CD4-positive, alpha-beta memory T cell (primary cell): ENCODE measurements at regions of chr14 and their contacts with region 1.

Region 1: GRCh38 chr14:106511006-106511799 is 984.8 kb downstream of the TMEM121 start:
- DNase-seq: peak; percentile 64 to 83 (median 72)
- H3K4me3 ChIP-seq: no peak overlapping the region
- H3K4me3 Mint-ChIP-seq: peak overlapping the region; percentile 50 to 83 (median 66)
- H3K27ac ChIP-seq: peak overlapping the region; percentile 47
- H3K27ac Mint-ChIP-seq: peak overlapping the region; percentile 86 to 98 (median 97)
- H3K4me1 ChIP-seq: peaks cover 77% of the 10 kb centered on the region
- H3K4me1 Mint-ChIP-seq: peaks cover 53 to 82% (median 70%) of the 10 kb centered on the region in 4 donors
- H3K27me3 ChIP-seq: no peaks in the 10 kb centered on the region
- H3K27me3 Mint-ChIP-seq: no peaks in the 10 kb centered on the region

Region 2: GRCh38 chr14:106417224-106418049 is 93.8 kb before region 1 on chr14:
- CTCF ChIA-PET with region 1: interaction called, 12 read pairs
- POLR2A ChIA-PET with region 1: no interaction called
- intact Hi-C with region 1: no loop called
- DNase-seq: peak; percentile 55 to 87 (median 72)
- H3K4me3 ChIP-seq: no peak overlapping the region
- H3K4me3 Mint-ChIP-seq: peak overlapping the region in 2 of 8 donors; percentile 36 to 59
- H3K27ac ChIP-seq: no peak overlapping the region
- H3K27ac Mint-ChIP-seq: peak overlapping the region in 5 of 7 donors; percentile 37 to 91 (median 81)
- H3K4me1 ChIP-seq: no peaks in the 10 kb centered on the region
- H3K4me1 Mint-ChIP-seq: peaks cover 0 to 7% (median 3%) of the 10 kb centered on the region in 4 donors
- H3K27me3 ChIP-seq: no peaks in the 10 kb centered on the region
- H3K27me3 Mint-ChIP-seq: peaks cover 0 to 12% of the 10 kb centered on the region in 2 donors

Region 3: DNA sequence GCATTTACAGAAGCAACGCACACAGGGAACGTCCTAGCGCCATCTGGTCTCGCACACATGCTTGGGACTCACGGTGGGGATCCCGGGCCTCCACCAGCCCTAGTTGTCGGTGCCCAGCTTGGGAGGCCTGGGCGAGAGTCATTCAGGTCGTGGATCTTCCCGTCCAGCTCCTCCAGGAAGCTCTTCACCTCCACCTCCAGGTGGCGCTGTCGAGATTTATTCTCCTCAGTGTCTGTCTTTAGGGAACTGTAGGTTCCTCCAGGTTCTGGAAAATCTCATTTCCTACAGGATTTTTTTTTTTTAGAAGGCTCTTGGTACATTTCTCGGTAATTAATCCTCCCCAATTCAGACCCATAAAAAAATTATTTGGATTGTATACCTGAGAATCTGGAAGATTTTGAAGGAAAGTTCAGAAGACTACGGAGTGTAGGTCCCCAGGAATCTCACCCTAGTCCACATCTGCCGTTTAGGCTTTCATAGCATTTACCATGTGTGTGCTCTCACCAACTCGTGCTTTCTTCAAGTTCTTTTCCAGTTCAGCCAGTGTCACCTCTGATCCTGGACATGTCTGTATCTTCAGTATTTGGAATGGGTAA is 74.8 kb before region 1 on chr14:
- CTCF ChIA-PET with region 1: interaction called, 21 read pairs
- POLR2A ChIA-PET with region 1: interaction called, 6 read pairs
- intact Hi-C with region 1: no loop called
- DNase-seq: peak in 4 of 5 donors; percentile 47 to 66 (median 56)
- H3K4me3 ChIP-seq: no peak overlapping the region
- H3K4me3 Mint-ChIP-seq: no peak overlapping the region
- H3K27ac ChIP-seq: no peak overlapping the region
- H3K27ac Mint-ChIP-seq: no peak overlapping the region
- H3K4me1 ChIP-seq: no peaks in the 10 kb centered on the region
- H3K4me1 Mint-ChIP-seq: peaks cover 0 to 4% (median 1%) of the 10 kb centered on the region in 4 donors
- H3K27me3 ChIP-seq: no peaks in the 10 kb centered on the region
- H3K27me3 Mint-ChIP-seq: peaks cover 3 to 22% of the 10 kb centered on the region in 2 donors

Region 4: GRCh38 chr14:106459971-106460730 is 51.1 kb before region 1 on chr14:
- CTCF ChIA-PET with region 1: interaction called, 23 read pairs
- POLR2A ChIA-PET with region 1: interaction called, 4 read pairs
- intact Hi-C with region 1: loop called (anchors 2 kb)
- DNase-seq: peak; percentile 49 to 68 (median 66)
- H3K4me3 ChIP-seq: no peak overlapping the region
- H3K4me3 Mint-ChIP-seq: peak overlapping the region in 2 of 8 donors; percentile 32 to 35
- H3K27ac ChIP-seq: no peak overlapping the region
- H3K27ac Mint-ChIP-seq: peak overlapping the region in 2 of 7 donors; percentile 6 to 57
- H3K4me1 ChIP-seq: no peaks in the 10 kb centered on the region
- H3K4me1 Mint-ChIP-seq: peaks cover 2 to 8% (median 5%) of the 10 kb centered on the region in 4 donors
- H3K27me3 ChIP-seq: no peaks in the 10 kb centered on the region
- H3K27me3 Mint-ChIP-seq: peaks cover 10 to 14% of the 10 kb centered on the region in 2 donors

Region 5: GRCh38 chr14:106491851-106492250 is 19.4 kb before region 1 on chr14:
- CTCF ChIA-PET with region 1: interaction called, 52 read pairs
- POLR2A ChIA-PET with region 1: interaction called, 11 read pairs
- intact Hi-C with region 1: loop called (anchors 2 kb)
- DNase-seq: no peak
- H3K4me3 ChIP-seq: no peak overlapping the region
- H3K4me3 Mint-ChIP-seq: no peak overlapping the region
- H3K27ac ChIP-seq: no peak overlapping the region
- H3K27ac Mint-ChIP-seq: no peak overlapping the region
- H3K4me1 ChIP-seq: no peaks in the 10 kb centered on the region
- H3K4me1 Mint-ChIP-seq: peaks cover 7 to 11% (median 10%) of the 10 kb centered on the region in 4 donors
- H3K27me3 ChIP-seq: no peaks in the 10 kb centered on the region
- H3K27me3 Mint-ChIP-seq: no peaks in the 10 kb centered on the region

Region 6: DNA sequence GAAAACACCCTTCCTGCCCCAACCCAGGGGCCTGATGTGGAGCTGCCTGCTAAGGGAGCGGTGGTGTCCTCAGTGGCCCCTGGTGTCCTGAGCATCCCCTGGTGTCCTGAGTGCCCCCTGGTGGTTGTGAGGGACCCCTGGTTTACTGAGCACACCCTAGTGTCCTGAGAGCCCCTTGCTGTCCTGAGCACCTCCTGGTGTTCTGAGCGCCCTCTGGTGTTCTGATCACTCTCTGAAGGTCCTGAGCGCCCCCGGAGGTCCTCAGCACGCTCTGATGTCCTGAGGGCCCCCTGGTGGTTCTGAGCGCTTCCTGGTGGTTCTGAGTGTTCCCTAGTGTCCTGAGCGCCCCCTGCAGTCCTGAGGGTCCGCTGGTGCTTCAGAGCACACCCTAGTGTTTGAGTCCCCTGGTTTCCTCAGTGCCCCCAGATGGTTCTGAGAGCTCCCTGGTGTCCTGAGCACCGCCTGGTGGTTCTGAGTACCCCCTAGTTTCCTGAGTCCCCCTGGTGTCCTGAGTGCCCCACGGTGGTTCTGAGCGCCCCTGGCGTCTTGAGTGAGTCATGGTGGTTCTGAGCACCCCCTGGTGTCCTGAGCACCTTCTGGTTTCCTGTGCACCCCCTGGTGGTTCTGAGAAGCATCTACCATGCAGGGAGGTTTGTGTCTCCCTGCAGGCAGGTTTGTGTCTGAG is 19.4 kb after region 1 on chr14:
- CTCF ChIA-PET with region 1: interaction called, 28 read pairs
- POLR2A ChIA-PET with region 1: interaction called, 3 read pairs
- intact Hi-C with region 1: no loop called
- DNase-seq: peak; percentile 36 to 66 (median 44)
- H3K4me3 ChIP-seq: no peak overlapping the region
- H3K4me3 Mint-ChIP-seq: no peak overlapping the region
- H3K27ac ChIP-seq: no peak overlapping the region
- H3K27ac Mint-ChIP-seq: peak overlapping the region in 1 of 7 donors; percentile 27
- H3K4me1 ChIP-seq: no peaks in the 10 kb centered on the region
- H3K4me1 Mint-ChIP-seq: no peaks in the 10 kb centered on the region
- H3K27me3 ChIP-seq: no peaks in the 10 kb centered on the region
- H3K27me3 Mint-ChIP-seq: peaks cover 23 to 24% of the 10 kb centered on the region in 2 donors

Region 7: DNA sequence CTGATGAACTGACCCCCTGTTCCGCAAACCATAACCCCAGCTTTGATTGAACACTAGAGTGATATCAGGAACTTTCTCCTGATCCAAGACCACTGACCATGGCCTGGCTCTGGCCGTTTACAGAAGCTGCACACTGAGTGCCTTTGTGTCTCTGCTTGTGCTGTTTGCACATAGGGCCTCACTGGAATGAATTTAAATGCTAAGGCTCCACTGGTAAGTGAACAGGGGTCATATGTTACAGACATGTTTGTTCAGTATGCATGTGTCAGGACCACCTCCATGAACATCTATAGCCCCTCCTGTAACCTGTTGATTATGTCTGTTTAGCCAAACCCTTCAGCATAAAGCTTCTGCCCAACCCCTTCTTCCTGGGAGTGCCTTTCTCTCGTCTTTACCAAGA is 254.9 kb after region 1 on chr14:
- CTCF ChIA-PET with region 1: no interaction called
- POLR2A ChIA-PET with region 1: no interaction called
- intact Hi-C with region 1: no loop called
- DNase-seq: no peak
- H3K4me3 ChIP-seq: no peak overlapping the region
- H3K4me3 Mint-ChIP-seq: peak overlapping the region in 2 of 8 donors; percentile 74 to 77
- H3K27ac ChIP-seq: no peak overlapping the region
- H3K27ac Mint-ChIP-seq: peak overlapping the region in 4 of 7 donors; percentile 22 to 82 (median 65)
- H3K4me1 ChIP-seq: peaks cover 34% of the 10 kb centered on the region
- H3K4me1 Mint-ChIP-seq: peaks cover 29 to 56% (median 39%) of the 10 kb centered on the region in 4 donors
- H3K27me3 ChIP-seq: no peaks in the 10 kb centered on the region
- H3K27me3 Mint-ChIP-seq: peaks cover 0 to 1% of the 10 kb centered on the region in 2 donors